AG04450 (cell line): ENCODE measurements at regions of chr12 and their contacts with region 1.

Region 1: DNA sequence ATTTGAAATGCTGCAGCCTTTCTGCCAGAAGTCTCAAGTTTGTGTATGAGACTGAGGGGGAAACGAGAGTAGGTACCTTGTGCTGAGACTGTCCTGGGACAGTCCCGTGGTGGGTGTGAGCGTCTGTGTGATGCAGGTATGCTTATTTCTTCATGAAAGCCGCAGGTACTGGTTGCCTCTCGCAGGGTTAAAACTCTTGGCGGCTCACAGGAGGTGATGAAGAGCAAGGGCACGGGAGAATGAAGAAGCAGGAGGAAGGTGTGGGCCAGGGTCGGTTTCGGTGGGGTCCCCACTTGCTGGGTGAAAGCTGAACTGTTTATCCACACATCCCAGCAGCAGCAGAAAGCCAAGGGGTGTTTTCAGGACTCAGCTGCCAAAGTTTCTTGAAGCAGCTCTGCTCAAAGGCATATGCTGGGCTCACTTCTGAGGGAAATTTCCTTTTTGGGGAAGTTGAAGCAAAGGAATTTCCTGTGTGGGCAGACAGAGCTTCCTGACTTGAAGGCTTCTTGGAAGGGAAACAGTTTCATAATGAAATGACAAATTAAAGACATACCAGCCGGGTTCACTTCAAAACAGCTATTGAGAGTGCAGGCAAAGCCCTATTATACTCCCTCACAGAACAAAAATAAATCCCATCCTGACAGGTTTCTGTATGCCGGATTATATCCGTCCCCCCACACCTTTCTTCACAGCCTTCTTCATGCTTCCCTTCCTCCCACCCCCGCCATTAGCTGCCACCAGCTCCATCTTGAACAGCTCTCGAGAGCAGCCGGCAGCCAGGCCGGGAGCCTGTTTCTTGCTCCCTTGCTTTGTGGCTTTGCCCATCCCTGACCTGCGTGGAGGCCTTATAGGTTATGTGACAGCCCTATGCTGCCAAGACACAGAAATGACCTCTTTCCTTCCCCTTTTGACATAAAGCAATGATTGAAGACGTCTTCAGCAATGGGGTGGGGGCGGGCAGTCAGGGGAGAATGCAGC is 116.6 kb downstream of the ETV6 start:
- DNase-seq: peak; percentile 46
- H3K4me3 ChIP-seq: no peak overlapping the region
- H3K27ac ChIP-seq: peak overlapping the region; percentile 85
- H3K27me3 ChIP-seq: no peaks in the 10 kb centered on the region
- CTCF ChIP-seq: no peak

Region 2: DNA sequence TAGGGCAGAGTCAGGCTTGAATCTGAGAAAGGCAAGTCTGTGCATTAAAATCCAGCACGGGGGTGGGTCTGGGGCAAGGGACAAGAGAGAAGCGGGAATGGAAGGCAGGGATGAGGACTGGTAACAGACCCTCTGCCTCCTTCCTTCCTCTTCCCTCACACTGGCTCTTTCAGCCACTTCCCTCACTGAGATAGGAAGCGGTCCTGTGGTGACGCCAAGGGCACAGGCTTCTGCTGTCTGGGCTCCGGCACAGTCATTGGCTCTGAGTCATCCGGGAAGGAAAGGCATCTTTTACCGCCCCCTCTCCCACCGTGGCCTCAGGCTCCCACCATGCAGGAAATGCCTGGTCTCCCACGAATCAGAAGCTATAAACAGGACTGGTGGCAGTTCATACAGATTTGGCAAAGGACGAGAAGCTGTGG is 46.4 kb before region 1 on chr12:
- CTCF ChIA-PET with region 1: no interaction called
- POLR2A ChIA-PET with region 1: interaction called, 11 read pairs
- DNase-seq: peak; percentile 82
- H3K4me3 ChIP-seq: no peak overlapping the region
- H3K27ac ChIP-seq: peak overlapping the region; percentile 87
- H3K27me3 ChIP-seq: no peaks in the 10 kb centered on the region
- CTCF ChIP-seq: no peak

Region 3: DNA sequence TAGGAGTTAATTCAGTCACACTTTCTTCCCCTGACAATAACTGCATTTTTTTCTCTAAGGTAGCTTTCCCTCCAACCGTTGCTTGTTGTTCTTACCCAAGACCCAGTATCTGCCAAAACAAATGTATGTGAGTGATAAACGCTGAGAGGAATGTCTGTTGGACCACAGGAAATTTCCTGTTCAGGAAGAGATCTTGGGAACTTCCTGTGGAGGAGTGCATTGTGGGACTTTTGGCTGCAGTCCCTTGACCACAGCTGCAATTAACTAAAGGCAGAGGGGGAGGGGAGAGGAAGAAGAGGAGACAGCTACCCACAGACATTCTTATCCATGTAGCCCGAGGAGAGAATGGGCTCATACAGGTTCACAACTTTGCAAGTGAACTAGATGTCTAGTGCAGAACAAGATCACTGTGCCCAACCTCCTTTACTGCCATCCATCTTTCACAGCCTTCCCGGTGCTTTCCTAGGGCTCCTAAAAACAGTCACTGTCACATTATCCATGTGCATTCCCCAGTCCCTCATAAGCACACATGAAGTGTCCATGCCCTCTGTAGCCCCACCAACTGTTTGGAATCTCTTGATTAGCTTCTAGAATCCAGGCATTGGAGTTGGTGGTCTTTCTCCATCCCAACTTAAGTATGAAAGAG is 32.9 kb after region 1 on chr12:
- CTCF ChIA-PET with region 1: interaction called, 3 read pairs
- POLR2A ChIA-PET with region 1: interaction called, 21 read pairs
- DNase-seq: peak; percentile 63
- H3K4me3 ChIP-seq: no peak overlapping the region
- H3K27ac ChIP-seq: peak overlapping the region; percentile 96
- H3K27me3 ChIP-seq: no peaks in the 10 kb centered on the region
- CTCF ChIP-seq: no peak